HCT116 (cell line): ENCODE measurements at regions of chr1 and their contacts with region 1.

Region 1: GRCh38 chr1:204806943-204807687 is 63.5 kb upstream of the NFASC start:
- DNase-seq: peak; percentile 76
- ATAC-seq: peak; percentile 94
- H3K4me3 ChIP-seq: peak overlapping the region; percentile 42 to 61
- H3K27ac ChIP-seq: no peak overlapping the region
- H3K4me1 ChIP-seq: peaks cover 0 to 12% of the 10 kb centered on the region in 2 experiments; a peak in 2 of 4 replicates
- H3K27me3 ChIP-seq: peaks cover 8% of the 10 kb centered on the region; the same call in 1 of the 2 replicates
- CTCF ChIP-seq: peak; percentile 99 to 100 (median 99)
- POLR2A ChIP-seq: no peak
- RAD21 ChIP-seq: peak; percentile 92

Region 2: GRCh38 chr1:204446370-204447111 is 360.6 kb before region 1 on chr1:
- CTCF ChIA-PET with region 1: interaction called, 16 read pairs
- POLR2A ChIA-PET with region 1: no interaction called
- RAD21 ChIA-PET with region 1: interaction called, 3 read pairs
- intact Hi-C with region 1: loop called (anchors 5 kb)
- DNase-seq: no peak
- ATAC-seq: peak; percentile 87
- H3K4me3 ChIP-seq: no peak overlapping the region
- H3K27ac ChIP-seq: no peak overlapping the region
- H3K4me1 ChIP-seq: peaks cover 17 to 45% of the 10 kb centered on the region in 2 experiments
- H3K27me3 ChIP-seq: no peaks in the 10 kb centered on the region
- CTCF ChIP-seq: peak; percentile 70 to 87 (median 76)
- POLR2A ChIP-seq: no peak
- RAD21 ChIP-seq: peak; percentile 88

Region 3: GRCh38 chr1:204516180-204516879 is 290.8 kb before region 1 on chr1 and contains the start of gene MDM4:
- CTCF ChIA-PET with region 1: interaction called, 12 read pairs
- POLR2A ChIA-PET with region 1: interaction called, 4 read pairs
- RAD21 ChIA-PET with region 1: no interaction called
- intact Hi-C with region 1: no loop called
- DNase-seq: peak; percentile 97
- ATAC-seq: peak; percentile 94
- H3K4me3 ChIP-seq: peak within 1 kb of the TSS; percentile 79
- H3K27ac ChIP-seq: peak within 1 kb of the TSS; percentile 90
- H3K4me1 ChIP-seq: peaks cover 20% of the 10 kb centered on the region in 2 experiments
- H3K27me3 ChIP-seq: no peaks in the 10 kb centered on the region
- CTCF ChIP-seq: no peak
- POLR2A ChIP-seq: peak; percentile 85
- RAD21 ChIP-seq: no peak
- total RNA-seq, gene MDM4: 79.5 TPM

Region 4: DNA sequence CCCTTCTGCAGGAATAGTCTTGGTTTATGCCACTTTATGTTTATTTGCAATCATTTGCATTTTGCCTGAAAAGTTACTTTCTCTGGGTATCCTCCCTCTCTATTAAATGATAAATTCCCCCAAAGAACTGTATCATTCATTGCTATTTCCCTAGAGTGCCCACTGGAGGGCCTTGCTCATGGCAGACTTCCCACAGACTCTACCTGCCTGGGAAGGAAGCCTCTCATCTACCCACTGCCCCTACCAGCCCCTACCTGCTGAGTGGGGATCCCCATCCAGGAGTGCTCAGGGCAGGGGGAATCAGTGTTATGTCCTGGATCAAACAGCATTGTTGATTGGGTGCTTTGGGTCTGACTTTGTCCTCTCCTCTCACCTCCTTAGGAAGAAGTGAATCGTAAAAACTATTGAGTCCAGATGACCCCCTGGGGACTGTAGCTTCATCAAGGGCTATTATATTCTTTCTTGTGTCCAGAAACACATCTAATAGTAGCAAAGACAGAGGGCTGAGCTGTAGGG is 114.7 kb before region 1 on chr1:
- CTCF ChIA-PET with region 1: interaction called, 18 read pairs
- POLR2A ChIA-PET with region 1: no interaction called
- RAD21 ChIA-PET with region 1: no interaction called
- intact Hi-C with region 1: loop called (anchors 1 kb)
- DNase-seq: no peak
- ATAC-seq: peak; percentile 85
- H3K4me3 ChIP-seq: no peak overlapping the region
- H3K27ac ChIP-seq: no peak overlapping the region
- H3K4me1 ChIP-seq: peaks cover 2 to 10% of the 10 kb centered on the region in 2 experiments; a peak in 3 of 4 replicates
- H3K27me3 ChIP-seq: no peaks in the 10 kb centered on the region
- CTCF ChIP-seq: peak; percentile 54 to 61 (median 54); a peak in 5 of 6 replicates
- POLR2A ChIP-seq: no peak
- RAD21 ChIP-seq: peak; percentile 48

Region 5: DNA sequence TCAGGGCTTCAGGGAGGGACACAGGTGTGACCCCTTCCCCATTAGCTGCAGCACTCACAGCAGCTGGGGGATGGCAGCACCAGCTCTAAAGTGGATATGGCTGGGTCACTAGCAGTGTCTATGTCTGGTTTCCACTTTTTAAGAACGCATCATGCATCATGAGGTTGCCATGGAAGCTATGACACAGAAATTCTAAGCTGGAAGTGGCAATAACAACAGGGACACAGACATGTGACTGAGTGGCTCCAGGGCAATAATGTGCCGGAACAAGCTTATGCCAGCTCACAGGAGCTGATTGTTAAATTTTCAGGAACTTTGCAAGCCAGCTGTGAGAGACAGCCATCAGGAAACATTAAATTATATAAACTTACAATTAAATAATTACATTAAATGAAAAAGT is 12.4 kb after region 1 on chr1:
- CTCF ChIA-PET with region 1: interaction called, 25 read pairs
- POLR2A ChIA-PET with region 1: no interaction called
- RAD21 ChIA-PET with region 1: no interaction called
- intact Hi-C with region 1: no loop called
- DNase-seq: no peak
- ATAC-seq: no peak
- H3K4me3 ChIP-seq: no peak overlapping the region
- H3K27ac ChIP-seq: no peak overlapping the region
- H3K4me1 ChIP-seq: no peaks in the 10 kb centered on the region
- H3K27me3 ChIP-seq: peaks cover 49% of the 10 kb centered on the region
- CTCF ChIP-seq: no peak
- POLR2A ChIP-seq: no peak
- RAD21 ChIP-seq: no peak

Region 6: GRCh38 chr1:204885288-204885711 is 78.2 kb after region 1 on chr1:
- CTCF ChIA-PET with region 1: no interaction called
- POLR2A ChIA-PET with region 1: no interaction called
- RAD21 ChIA-PET with region 1: no interaction called
- intact Hi-C with region 1: no loop called
- DNase-seq: no peak
- ATAC-seq: no peak
- H3K4me3 ChIP-seq: no peak overlapping the region
- H3K27ac ChIP-seq: no peak overlapping the region
- H3K4me1 ChIP-seq: no peaks in the 10 kb centered on the region
- H3K27me3 ChIP-seq: peaks cover 9% of the 10 kb centered on the region; the same call in 1 of the 2 replicates
- CTCF ChIP-seq: no peak
- POLR2A ChIP-seq: no peak
- RAD21 ChIP-seq: no peak

Region 7: DNA sequence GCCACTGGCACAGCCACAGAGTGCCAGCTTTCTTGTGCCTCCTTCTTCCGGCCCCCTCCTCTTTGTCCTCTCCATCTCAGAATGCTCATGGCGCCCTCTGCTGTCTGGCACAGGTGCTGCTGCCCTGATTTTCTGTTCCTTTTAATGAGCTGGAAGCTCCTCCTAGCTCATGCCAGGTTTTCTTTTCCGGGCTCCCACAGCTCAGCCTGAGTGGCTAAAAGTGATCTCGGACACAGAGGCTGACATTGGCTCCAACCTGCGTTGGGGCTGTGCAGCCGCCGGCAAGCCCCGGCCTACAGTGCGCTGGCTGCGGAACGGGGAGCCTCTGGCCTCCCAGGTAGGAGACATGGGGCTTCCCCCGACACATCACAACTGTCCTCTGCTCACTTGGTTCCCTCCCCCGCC is 254.6 kb after region 1 on chr1:
- CTCF ChIA-PET with region 1: interaction called, 27 read pairs
- POLR2A ChIA-PET with region 1: no interaction called
- RAD21 ChIA-PET with region 1: interaction called, 4 read pairs
- intact Hi-C with region 1: loop called (anchors 5 kb)
- DNase-seq: peak; percentile 35
- ATAC-seq: peak; percentile 83
- H3K4me3 ChIP-seq: no peak overlapping the region
- H3K27ac ChIP-seq: no peak overlapping the region
- H3K4me1 ChIP-seq: no peaks in the 10 kb centered on the region; a peak in 1 of 4 replicates
- H3K27me3 ChIP-seq: no peaks in the 10 kb centered on the region
- CTCF ChIP-seq: peak; percentile 90 to 92 (median 92)
- POLR2A ChIP-seq: no peak
- RAD21 ChIP-seq: peak; percentile 89